Transverse colon (tissue), 4 donors: ENCODE measurements at regions of chr14 and their contacts with region 1.

Region 1: DNA sequence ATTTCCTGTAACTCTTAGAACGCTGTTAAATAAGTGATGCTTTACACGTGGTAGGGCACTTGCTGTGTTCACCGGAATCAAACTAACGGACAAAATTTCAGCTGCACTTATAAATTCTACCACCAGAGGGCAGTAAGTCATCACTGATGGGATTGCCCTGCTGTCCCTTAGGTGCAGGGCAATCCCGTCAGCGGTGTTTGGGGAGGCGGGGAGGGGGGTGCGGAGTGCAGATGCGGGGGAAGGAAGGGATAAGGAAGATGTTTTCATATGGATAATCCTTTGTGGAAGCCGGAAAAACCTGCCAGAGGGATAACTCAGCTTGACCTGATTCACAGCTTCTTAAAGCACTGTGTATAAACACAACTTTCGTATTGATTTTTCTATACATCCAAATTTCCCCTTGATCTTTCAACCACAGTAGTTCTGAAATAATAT is 21.7 kb upstream of the SLC10A1 start:
- DNase-seq: peak; percentile 19
- H3K4me3 ChIP-seq: no peak overlapping the region
- H3K27ac ChIP-seq: no peak overlapping the region
- H3K4me1 ChIP-seq: no peaks in the 10 kb centered on the region
- H3K27me3 ChIP-seq: peaks cover 13% of the 10 kb centered on the region
- CTCF ChIP-seq: peak; percentile 86 to 93 (median 89)
- EP300 ChIP-seq: no peak
- POLR2A ChIP-seq: no peak

Region 2: DNA sequence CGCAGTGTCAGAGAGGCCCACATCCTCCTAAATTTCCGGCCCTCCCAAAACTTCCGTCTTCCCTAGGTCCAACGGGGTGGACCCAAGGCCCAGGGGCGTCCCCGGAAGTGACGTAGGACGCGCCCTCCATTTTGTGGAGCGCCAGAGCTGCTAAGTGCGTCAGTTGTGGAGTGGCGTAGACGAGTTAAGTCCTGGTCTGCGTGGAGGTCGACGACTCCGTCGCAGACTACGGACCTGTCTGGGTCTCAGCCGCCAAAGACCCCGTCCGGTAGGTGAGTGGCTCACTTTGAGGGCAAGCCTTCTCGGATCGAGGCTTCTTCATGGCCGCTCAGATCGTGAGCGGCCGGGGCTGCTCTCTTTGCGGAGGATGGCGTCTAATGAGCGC is 51.8 kb before region 1 on chr14 and contains the start of gene SRSF5:
- in situ Hi-C with region 1: no loop called
- intact Hi-C with region 1: no loop called
- DNase-seq: peak; percentile 97
- H3K4me3 ChIP-seq: peak within 1 kb of the TSS; percentile 85 to 99 (median 90)
- H3K27ac ChIP-seq: peak within 1 kb of the TSS; percentile 98 to 100 (median 100)
- H3K4me1 ChIP-seq: peaks cover 26 to 55% (median 31%) of the 10 kb centered on the region in 4 donors
- H3K27me3 ChIP-seq: no peaks in the 10 kb centered on the region
- CTCF ChIP-seq: peak in 1 of 5 experiments; percentile 11
- EP300 ChIP-seq: no peak
- POLR2A ChIP-seq: peak; percentile 99
- total RNA-seq, gene SRSF5: 255 to 557 (median 471) TPM

Region 3: DNA sequence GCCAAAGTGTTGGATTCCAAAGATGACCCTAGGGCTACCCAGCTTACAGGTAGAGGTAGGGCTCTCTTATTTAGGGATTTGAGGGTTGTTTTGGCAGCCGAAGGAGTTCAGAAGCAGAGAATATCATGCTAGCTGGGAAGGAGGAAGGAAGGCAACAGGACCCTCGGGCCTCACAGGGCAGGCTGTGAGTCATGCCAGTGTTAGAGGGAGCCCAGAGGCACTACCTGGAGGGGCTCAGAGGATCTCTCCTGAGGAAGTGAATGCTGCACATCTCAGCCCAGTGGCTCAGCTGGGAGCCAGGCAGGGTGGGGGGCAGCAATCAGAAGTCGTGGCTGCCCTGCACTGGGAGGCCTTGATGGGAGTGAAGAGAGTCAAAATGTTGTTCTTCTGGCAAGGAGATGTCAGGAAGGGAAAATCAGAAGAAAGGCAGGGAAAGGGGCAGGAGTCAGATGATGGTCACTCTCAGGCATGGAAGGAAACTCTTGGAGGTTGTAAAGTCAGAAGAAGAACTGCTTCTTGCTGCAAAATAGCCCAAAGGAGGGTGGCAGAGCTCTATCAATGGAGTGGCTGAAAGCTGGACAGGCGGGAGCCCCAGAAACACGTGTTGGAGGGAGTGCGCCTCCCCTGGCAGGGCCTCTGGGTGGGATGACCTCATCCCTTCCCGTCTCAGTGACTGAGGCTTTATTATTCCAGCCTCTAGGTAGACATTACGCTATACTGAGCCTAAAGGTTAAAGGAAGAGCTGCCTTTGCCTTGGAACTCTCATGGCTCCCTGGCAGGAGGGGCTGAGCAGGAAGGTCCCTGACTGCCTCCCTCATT is 201.8 kb after region 1 on chr14:
- in situ Hi-C with region 1: loop called (anchors 5 to 10 kb)
- intact Hi-C with region 1: loop called (anchors 5 kb)
- DNase-seq: no peak
- H3K4me3 ChIP-seq: no peak overlapping the region
- H3K27ac ChIP-seq: no peak overlapping the region
- H3K4me1 ChIP-seq: peaks cover 0 to 4% (median 0%) of the 10 kb centered on the region in 4 donors
- H3K27me3 ChIP-seq: no peaks in the 10 kb centered on the region
- CTCF ChIP-seq: no peak
- EP300 ChIP-seq: no peak
- POLR2A ChIP-seq: no peak